AG04449 (cell line): ENCODE measurements at regions of chr12 and their contacts with region 1.

Region 1: DNA sequence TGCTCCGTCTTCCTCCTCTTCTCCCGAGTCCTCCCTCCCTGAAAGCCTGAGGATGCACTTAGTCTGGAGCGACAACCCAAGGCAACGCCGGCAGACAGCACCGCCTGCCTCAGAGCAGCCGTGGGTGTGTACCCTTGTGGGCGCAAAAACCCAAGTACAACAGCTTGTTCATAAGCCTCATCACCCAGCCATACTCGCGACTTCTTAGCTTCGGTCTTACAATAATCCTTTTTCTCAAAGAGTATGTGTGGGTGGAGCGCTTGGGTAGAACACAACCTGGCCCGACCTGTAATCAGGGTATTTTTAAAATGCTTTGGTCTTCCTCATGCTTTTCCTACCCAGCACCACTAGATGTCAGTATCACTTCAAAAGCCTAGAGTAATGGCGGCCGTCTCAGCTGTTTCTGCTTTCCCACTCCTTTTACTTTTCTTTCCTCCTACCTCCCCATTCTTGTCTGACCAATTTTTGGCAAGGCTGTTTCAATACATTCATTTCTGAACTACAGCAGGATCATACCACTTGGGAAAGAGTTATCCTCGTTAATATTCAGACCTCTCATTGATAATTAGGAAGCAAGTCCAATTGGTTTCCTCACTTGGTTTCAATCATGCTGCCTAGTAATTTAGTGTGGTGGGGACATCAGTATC is 198.9 kb downstream of the EPS8 start:
- DNase-seq: no peak
- H3K4me3 ChIP-seq: peak overlapping the region; percentile 54
- CTCF ChIP-seq: peak; percentile 65

Region 2: GRCh38 chr12:15540469-15540872 is 49.8 kb before region 1 on chr12:
- CTCF ChIA-PET with region 1: interaction called, 542 read pairs
- POLR2A ChIA-PET with region 1: no interaction called
- DNase-seq: no peak
- H3K4me3 ChIP-seq: no peak overlapping the region
- CTCF ChIP-seq: no peak

Region 3: DNA sequence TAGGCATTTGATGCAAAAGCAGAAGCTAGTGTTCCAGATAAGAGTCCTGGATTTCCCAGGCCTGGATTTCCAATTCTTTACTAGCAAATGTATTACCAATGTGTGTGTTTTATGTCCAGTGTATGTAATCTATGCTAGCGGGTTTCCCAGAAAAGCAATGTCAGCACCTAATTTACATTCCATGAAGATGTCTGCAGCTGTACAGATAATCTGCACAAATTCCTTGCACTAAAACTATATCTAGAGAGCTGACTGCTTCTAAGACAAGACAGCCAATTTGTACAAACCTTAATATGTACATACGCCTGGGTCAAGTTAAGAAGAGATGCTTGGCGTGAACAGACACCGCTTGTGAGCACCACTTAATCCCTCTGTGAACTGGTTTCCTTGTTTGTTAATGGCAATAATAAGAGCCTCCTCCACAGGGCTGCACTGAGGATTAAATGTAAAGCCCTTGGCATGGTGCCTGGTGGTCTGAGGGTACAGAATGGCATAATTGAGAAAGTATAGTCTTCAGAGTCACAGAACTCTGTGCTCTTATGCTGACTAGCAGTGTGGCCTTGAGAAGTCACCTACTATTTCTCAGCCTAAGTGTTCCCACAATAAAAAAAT is 13.3 kb after region 1 on chr12:
- CTCF ChIA-PET with region 1: interaction called, 12 read pairs
- POLR2A ChIA-PET with region 1: no interaction called
- DNase-seq: no peak
- H3K4me3 ChIP-seq: no peak overlapping the region
- CTCF ChIP-seq: no peak

Region 4: GRCh38 chr12:15650399-15651128 is 60.3 kb after region 1 on chr12:
- CTCF ChIA-PET with region 1: no interaction called
- POLR2A ChIA-PET with region 1: no interaction called
- DNase-seq: no peak
- H3K4me3 ChIP-seq: no peak overlapping the region
- CTCF ChIP-seq: no peak

Region 5: DNA sequence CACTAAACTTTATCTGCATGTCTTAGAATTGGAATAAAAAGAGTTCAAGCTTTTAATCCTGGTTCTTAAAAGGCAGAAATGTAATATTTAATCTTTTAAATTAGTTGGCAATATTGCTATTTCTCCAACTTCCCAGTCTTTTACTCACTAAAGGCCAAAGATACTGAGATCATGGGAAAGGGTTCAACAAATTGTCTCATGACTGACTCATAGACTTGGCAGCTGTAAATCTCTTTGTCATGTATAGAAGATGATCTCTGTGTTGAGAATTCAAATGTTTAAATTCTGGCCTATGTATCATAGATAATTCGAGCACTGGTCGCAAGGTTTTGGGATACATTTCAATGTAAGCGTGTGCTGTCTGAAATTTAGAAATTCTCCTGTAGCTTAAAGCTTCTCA is 251.8 kb after region 1 on chr12:
- CTCF ChIA-PET with region 1: interaction called, 10 read pairs
- POLR2A ChIA-PET with region 1: no interaction called
- DNase-seq: peak; percentile 65
- H3K4me3 ChIP-seq: no peak overlapping the region
- CTCF ChIP-seq: no peak

Region 6: GRCh38 chr12:15863984-15864383 is 273.7 kb after region 1 on chr12:
- CTCF ChIA-PET with region 1: interaction called, 393 read pairs
- POLR2A ChIA-PET with region 1: no interaction called
- DNase-seq: no peak
- H3K4me3 ChIP-seq: no peak overlapping the region
- CTCF ChIP-seq: no peak